ENCODE measurements at regions of chr6 and their contacts with region 1.

Region 1: DNA sequence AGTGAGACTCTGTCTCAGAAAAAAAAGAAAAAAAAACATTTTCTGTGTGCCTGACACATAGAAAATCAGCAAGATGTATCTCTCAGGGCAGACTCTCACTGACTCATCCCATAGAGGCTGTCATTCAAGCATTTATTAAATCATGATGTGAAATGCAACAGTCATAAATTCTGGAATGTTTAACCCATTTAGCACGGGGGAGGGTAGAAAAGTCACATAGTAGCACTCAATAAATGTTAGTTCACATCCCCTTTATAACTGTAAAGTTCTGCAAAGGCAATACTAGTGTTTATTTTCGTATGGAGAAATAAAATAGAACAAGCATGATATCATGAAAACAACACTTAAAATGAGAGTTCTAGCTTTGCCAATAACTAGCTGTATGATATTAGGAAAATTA is 15.5 kb upstream of the CARMIL1 start:
- DNase-seq: no peak
- ATAC-seq: no peak
- H3K4me3 Mint-ChIP-seq: no peak overlapping the region
- H3K27ac Mint-ChIP-seq: no peak overlapping the region
- H3K4me1 Mint-ChIP-seq: peaks cover 2% of the 10 kb centered on the region
- H3K27me3 Mint-ChIP-seq: peaks cover 1% of the 10 kb centered on the region
- CTCF ChIP-seq: no peak

Region 2: DNA sequence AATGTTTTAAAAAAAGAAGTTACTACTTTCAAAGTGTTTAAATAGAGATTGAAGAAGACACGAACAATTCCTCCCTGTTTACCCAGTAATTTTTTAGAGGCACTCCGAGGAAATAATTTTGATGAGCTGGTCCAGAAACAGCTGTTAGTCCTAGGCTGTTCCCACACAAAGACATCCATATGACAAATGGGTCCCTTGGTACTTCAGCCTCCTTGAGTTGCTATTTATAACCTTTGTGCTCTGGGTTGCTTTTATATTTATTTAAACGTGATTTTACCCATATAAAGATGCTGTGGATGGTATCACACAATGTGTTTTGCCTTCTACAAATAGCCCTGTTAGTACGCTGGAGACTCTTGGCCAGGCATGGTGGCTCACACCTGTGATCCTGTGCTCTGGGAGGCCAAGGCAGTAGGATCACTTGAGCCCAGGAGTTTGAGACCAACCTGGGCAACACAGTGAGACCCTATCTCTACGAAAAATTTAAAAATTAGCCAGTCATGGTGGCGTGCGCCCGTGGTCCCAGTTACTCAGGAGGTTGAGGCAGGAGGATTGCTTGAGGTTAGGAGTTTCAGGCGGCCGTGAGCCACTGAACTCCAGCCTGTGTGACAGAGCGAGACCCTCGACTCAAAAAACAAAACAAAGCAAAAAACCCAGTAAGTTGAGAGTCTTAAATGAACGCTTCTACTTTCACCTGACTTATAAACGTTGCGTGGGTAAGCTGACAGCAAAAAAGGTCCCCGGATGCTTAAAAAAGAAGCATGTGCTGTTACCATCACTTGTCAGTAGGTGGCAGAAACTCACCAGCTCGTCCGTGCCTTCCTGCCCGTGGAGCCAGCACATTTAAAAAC is 408.0 kb before region 1 on chr6:
- CTCF ChIA-PET with region 1: no interaction called
- POLR2A ChIA-PET with region 1: no interaction called
- intact Hi-C with region 1: no loop called
- DNase-seq: peak; percentile 83
- ATAC-seq: peak; percentile 68
- H3K4me3 Mint-ChIP-seq: peak overlapping the region; percentile 22
- H3K27ac Mint-ChIP-seq: peak overlapping the region; percentile 87
- H3K4me1 Mint-ChIP-seq: peaks cover 61% of the 10 kb centered on the region
- H3K27me3 Mint-ChIP-seq: no peaks in the 10 kb centered on the region
- CTCF ChIP-seq: peak; percentile 88

Region 3: DNA sequence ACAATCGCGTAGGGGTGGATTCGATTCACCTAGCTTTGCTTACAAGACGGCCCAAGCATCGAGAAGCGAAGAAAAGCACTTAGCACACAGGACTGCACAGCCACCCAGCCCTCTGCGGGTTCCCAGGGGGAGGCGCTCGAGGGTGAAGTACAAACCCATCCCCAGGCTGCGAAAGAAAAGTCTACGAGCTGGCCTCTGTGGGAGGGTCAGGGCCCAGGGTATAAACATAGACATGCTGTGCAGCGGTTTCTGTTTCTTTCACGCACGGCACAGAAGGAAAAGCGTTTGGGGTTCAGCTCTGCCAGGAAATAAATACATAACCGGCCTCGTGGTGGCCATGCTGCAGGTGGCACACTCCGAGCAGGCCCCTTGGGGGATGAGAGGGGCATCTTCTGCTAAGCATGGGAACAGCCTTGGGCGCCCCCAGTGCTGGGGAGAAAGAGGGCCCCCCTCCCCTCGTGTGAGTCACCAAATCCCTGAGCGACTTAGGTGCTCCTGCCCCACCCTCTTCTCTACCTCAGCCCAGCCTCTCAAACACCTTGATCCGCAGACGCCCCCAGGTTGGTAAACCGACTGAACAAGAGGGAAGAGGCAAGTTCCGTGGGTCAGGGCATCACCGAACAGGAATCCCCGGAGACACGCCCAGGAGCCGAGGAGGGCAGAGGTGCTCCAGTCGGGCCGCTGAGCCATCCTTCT is 236.3 kb before region 1 on chr6:
- CTCF ChIA-PET with region 1: no interaction called
- POLR2A ChIA-PET with region 1: no interaction called
- intact Hi-C with region 1: no loop called
- DNase-seq: peak; percentile 90
- ATAC-seq: peak; percentile 96
- H3K4me3 Mint-ChIP-seq: peak overlapping the region; percentile 65
- H3K27ac Mint-ChIP-seq: peak overlapping the region; percentile 81
- H3K4me1 Mint-ChIP-seq: peaks cover 45% of the 10 kb centered on the region
- H3K27me3 Mint-ChIP-seq: no peaks in the 10 kb centered on the region
- CTCF ChIP-seq: peak; percentile 42

Region 4: GRCh38 chr6:25250878-25251277 is 12.8 kb before region 1 on chr6:
- CTCF ChIA-PET with region 1: interaction called, 29 read pairs
- POLR2A ChIA-PET with region 1: no interaction called
- intact Hi-C with region 1: no loop called
- DNase-seq: peak; percentile 46
- ATAC-seq: peak; percentile 83
- H3K4me3 Mint-ChIP-seq: no peak overlapping the region
- H3K27ac Mint-ChIP-seq: no peak overlapping the region
- H3K4me1 Mint-ChIP-seq: peaks cover 18% of the 10 kb centered on the region
- H3K27me3 Mint-ChIP-seq: peaks cover 10% of the 10 kb centered on the region
- CTCF ChIP-seq: no peak

Region 5: DNA sequence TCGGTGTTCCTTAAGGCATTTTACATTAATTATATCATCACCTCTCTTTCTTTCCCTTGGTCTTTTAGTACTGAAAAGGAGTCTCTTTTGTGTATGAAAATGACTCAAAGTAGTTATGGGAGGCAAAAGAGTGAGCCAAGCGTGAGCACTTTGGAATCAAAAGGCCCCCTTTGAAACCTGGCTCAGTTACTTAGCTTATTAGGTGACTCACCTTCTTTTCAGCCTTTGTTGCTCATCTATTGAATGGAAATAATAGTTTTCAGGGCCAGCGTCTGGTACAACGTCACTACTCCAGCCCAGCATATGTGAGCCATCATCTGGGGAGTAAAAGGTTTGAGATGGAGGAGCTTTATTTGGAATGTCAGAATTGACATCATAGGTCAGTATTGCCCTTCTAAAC is 241.0 kb after region 1 on chr6:
- CTCF ChIA-PET with region 1: interaction called, 17 read pairs
- POLR2A ChIA-PET with region 1: no interaction called
- intact Hi-C with region 1: no loop called
- DNase-seq: no peak
- ATAC-seq: no peak
- H3K4me3 Mint-ChIP-seq: no peak overlapping the region
- H3K27ac Mint-ChIP-seq: no peak overlapping the region
- H3K4me1 Mint-ChIP-seq: no peaks in the 10 kb centered on the region
- H3K27me3 Mint-ChIP-seq: no peaks in the 10 kb centered on the region
- CTCF ChIP-seq: no peak

Region 6: DNA sequence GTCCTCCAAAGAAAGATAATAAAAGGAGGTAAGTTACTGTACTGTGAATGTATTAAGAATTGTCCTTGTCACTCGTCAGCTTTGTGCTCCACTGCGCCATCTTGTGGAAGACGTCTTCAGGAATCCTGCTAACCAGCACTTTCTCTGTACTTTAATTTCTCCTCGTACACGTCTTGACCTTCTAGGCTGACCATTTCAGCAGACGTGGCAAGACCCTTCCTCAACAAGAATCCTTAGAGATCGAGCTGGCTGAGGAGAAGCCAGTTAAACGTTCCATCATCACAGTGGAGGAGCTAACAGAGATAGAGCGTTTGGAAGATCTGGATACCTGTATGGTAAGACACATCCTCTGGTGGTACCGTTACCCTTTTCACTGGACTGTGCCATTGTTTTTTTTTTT is 292.9 kb after region 1 on chr6:
- CTCF ChIA-PET with region 1: interaction called, 68 read pairs
- POLR2A ChIA-PET with region 1: interaction called, 5 read pairs
- intact Hi-C with region 1: loop called (anchors 2 kb)
- DNase-seq: peak; percentile 90
- ATAC-seq: peak; percentile 66
- H3K4me3 Mint-ChIP-seq: no peak overlapping the region
- H3K27ac Mint-ChIP-seq: no peak overlapping the region
- H3K4me1 Mint-ChIP-seq: peaks cover 2% of the 10 kb centered on the region
- H3K27me3 Mint-ChIP-seq: no peaks in the 10 kb centered on the region
- CTCF ChIP-seq: peak; percentile 80

Measured in activated CD8-positive, alpha-beta T cell treated with anti-CD3 and anti-CD28 coated beads for 36 hours (primary cell).